Gastrocnemius medialis (tissue), 4 donors: ENCODE measurements at regions of chr11 and their contacts with region 1.

Region 1: GRCh38 chr11:65615229-65615941 is at the start of gene PCNX3:
- DNase-seq: peak; percentile 100
- ATAC-seq: peak; percentile 86 to 92
- H3K4me3 ChIP-seq: peak within 1 kb of the TSS; percentile 79 to 85 (median 80)
- H3K27ac ChIP-seq: peak within 1 kb of the TSS; percentile 82 to 93 (median 91)
- H3K4me1 ChIP-seq: peaks cover 30 to 44% of the 10 kb centered on the region in 2 donors
- H3K27me3 ChIP-seq: no peaks in the 10 kb centered on the region
- CTCF ChIP-seq: no peak
- POLR2A ChIP-seq: peak; percentile 27 to 75
- total RNA-seq, gene PCNX3: 7.6 to 15.6 (median 13.1) TPM

Region 2: GRCh38 chr11:65575568-65576231 is 39.7 kb before region 1 on chr11 and contains the start of gene EHBP1L1:
- in situ Hi-C with region 1: no loop called
- intact Hi-C with region 1: loop called (anchors 1 kb)
- DNase-seq: peak in 1 of 2 donors; percentile 73
- ATAC-seq: peak; percentile 13
- H3K4me3 ChIP-seq: peak within 1 kb of the TSS; percentile 65 to 97 (median 80)
- H3K27ac ChIP-seq: peak within 1 kb of the TSS; percentile 100
- H3K4me1 ChIP-seq: peaks cover 64 to 75% of the 10 kb centered on the region in 2 donors
- H3K27me3 ChIP-seq: no peaks in the 10 kb centered on the region
- CTCF ChIP-seq: no peak
- POLR2A ChIP-seq: peak; percentile 82 to 85
- total RNA-seq, gene EHBP1L1: 191 to 374 (median 250) TPM

Region 3: DNA sequence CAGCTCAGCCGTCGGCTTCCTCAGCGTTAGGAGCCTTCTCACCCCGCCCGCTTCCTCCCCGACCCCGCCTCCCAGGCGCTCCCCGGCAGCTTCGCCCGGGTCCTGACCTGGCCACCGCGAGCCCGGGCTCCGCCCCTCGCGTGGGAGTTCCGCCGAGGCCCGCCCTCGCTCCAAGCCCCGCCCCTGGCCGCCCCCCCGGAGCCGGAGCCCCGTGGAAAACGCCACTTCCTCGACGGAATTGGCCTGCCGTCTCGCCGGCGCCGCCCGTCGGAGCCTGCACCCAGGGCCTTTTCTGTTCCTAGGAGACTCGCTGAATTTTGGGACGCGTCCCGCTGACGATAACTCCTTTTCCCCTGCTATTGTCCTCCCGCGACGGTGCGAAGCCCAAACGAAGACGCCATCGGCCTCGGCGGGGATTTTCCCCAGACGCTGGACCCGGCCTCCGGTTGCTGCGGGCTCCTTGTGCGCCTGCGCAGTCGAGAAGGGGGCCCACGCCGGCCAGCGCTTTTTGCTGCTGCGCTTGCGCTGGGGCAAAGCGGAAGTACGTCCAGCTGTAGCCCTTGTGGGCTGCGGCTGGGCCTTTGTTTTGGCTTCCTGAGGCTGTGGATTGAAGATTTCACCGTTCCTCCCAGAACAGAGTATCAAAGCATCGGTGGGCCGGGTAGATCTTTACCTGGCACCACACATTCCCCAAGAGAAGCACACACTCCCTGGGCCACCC is 37.3 kb after region 1 on chr11:
- in situ Hi-C with region 1: no loop called
- intact Hi-C with region 1: loop called (anchors 2 kb)
- DNase-seq: peak; percentile 78 to 87
- ATAC-seq: peak; percentile 88 to 90
- H3K4me3 ChIP-seq: peak overlapping the region; percentile 61 to 77 (median 70)
- H3K27ac ChIP-seq: peak overlapping the region; percentile 91 to 96 (median 94)
- H3K4me1 ChIP-seq: peaks cover 20 to 28% of the 10 kb centered on the region in 2 donors
- H3K27me3 ChIP-seq: no peaks in the 10 kb centered on the region
- CTCF ChIP-seq: no peak
- POLR2A ChIP-seq: peak; percentile 44 to 46

Region 4: DNA sequence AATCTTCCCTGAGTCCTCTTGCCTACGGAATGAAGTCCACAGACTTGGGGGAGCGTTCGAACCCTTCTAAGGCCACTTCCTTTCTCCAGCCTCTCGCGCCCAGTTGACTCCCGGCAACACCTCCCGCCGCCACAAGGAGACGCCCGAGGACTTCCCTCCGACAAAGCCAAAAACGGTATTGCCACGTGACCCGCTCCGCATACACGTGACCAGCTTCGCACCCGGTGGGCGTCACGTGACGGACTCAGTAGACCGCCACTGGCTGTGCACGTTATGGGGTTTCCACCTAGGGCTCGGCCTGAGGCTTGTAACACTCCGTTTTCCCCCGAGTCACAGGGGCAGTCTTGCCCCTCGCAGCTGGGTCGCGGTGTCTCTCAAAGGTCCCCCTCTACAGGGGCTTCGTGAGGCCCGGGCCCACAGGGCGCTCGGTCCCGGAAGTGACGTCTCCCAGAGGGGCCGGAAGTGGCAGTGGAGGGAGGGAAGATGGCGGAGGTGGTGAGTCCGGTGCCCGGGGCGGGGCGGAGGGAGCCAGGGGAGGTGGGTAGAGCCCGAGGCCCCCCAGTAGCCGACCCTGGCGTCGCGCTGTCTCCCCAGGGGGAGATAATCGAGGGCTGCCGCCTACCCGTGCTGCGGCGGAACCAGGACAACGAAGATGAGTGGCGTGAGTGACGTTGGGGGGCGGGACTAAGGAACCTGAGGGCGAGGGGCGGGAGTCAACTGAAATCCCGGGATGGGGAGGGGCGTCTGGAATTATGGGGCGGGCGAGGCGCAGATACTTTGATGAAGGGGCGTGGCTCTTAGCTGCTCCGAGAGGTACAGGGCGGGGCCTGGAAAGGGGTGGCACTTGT is 96.6 kb after region 1 on chr11 and contains the start of gene KAT5:
- in situ Hi-C with region 1: no loop called
- intact Hi-C with region 1: loop called (anchors 5 kb)
- DNase-seq: peak; percentile 97 to 98
- ATAC-seq: peak; percentile 92 to 94
- H3K4me3 ChIP-seq: peak within 1 kb of the TSS; percentile 73 to 97 (median 84)
- H3K27ac ChIP-seq: peak within 1 kb of the TSS; percentile 96 to 100 (median 99)
- H3K4me1 ChIP-seq: peaks cover 15 to 18% of the 10 kb centered on the region in 2 donors
- H3K27me3 ChIP-seq: no peaks in the 10 kb centered on the region
- CTCF ChIP-seq: peak; percentile 98 to 100 (median 100)
- POLR2A ChIP-seq: peak; percentile 83 to 86
- total RNA-seq, gene KAT5: 40.0 to 69.4 (median 50.0) TPM

Region 5: GRCh38 chr11:66022401-66023185 is 407.2 kb after region 1 on chr11:
- in situ Hi-C with region 1: no loop called
- intact Hi-C with region 1: no loop called
- DNase-seq: peak; percentile 19 to 47
- ATAC-seq: peak; percentile 83 to 94
- H3K4me3 ChIP-seq: peak overlapping the region; percentile 21 to 49 (median 32)
- H3K27ac ChIP-seq: no peak overlapping the region
- H3K4me1 ChIP-seq: no peaks in the 10 kb centered on the region
- H3K27me3 ChIP-seq: no peaks in the 10 kb centered on the region
- CTCF ChIP-seq: peak; percentile 90 to 97 (median 92)
- POLR2A ChIP-seq: no peak